ENCODE measurements at regions of chr10 and their contacts with region 1.

Region 1: DNA sequence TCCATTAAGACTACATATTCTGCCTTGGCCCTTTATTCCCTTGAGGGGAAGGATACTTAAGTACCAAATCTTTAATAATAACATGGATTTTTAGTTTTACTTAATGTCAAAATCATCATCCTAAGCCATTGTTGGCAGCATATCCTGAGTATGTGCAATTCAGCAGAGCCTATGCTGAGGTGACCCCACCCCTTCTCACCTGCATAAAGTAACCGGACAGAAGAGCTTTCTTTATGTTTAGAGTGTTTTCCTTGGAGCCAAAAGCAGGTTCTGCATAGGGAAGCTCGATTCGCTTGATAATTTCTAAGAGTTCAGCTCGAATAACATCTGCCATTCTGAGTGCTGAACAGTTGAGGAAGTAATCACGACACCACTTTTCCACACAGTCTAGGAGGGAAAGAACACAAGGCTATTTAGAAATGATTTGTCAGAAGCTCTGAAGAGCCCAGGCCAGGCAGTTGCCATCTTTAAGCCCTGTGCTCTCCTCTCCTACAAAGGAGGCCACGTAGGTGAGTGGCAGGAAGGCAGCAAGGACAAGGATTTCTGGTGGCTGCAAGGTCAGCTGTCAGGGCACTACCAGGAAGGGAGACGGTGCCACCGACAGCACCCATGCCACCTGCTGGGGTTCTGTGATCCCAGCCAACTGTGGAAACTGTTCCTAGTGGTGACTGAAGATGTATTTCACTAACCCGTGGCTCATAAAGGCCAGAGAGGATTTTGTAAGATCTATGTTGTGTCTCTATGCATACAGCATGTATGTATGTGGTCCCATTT is 15.6 kb downstream of the BCCIP start:
- DNase-seq: peak in 3 of 4 donors; percentile 28 to 59 (median 51)
- ATAC-seq: no peak
- H3K4me3 ChIP-seq: no peak overlapping the region
- H3K27ac ChIP-seq: peak overlapping the region in 2 of 4 donors; percentile 27 to 54
- H3K4me1 ChIP-seq: peaks cover 19% of the 10 kb centered on the region
- H3K27me3 ChIP-seq: no peaks in the 10 kb centered on the region
- CTCF ChIP-seq: peak in 1 of 7 experiments; percentile 19
- POLR2A ChIP-seq: no peak

Region 2: DNA sequence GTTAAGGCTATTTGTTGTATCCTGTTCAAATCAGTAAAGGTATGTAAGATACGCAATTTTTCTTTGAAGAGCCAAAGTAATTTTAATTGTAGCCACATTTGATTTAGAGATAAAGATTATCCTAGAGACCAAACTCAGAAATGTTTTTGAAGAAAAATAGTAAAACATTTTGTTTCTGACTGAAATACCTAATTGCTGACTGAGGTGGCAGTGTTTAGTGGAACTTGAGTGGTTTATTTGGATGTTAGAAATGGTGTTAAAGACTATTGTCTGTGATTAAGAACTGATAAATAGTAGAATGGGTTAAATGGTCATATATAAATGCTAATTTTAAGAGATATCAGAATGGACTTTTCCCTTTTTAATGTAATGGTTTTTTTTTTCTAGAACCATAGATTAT is 104.2 kb before region 1 on chr10:
- intact Hi-C with region 1: loop called (anchors 10 kb)
- DNase-seq: no peak
- ATAC-seq: no peak
- H3K4me3 ChIP-seq: no peak overlapping the region
- H3K27ac ChIP-seq: no peak overlapping the region
- H3K4me1 ChIP-seq: no peaks in the 10 kb centered on the region
- H3K27me3 ChIP-seq: no peaks in the 10 kb centered on the region
- CTCF ChIP-seq: peak in 1 of 7 experiments; percentile 10
- POLR2A ChIP-seq: no peak